HCT116 (cell line): ENCODE measurements at regions of chr4 and their contacts with region 1.

Region 1: GRCh38 chr4:3791978-3792542 is 25.9 kb downstream of the ADRA2C start:
- DNase-seq: no peak
- ATAC-seq: peak; percentile 70
- H3K4me3 ChIP-seq: no peak overlapping the region
- H3K27ac ChIP-seq: no peak overlapping the region
- H3K4me1 ChIP-seq: no peaks in the 10 kb centered on the region
- H3K27me3 ChIP-seq: no peaks in the 10 kb centered on the region
- CTCF ChIP-seq: no peak
- POLR2A ChIP-seq: no peak
- RAD21 ChIP-seq: no peak

Region 2: DNA sequence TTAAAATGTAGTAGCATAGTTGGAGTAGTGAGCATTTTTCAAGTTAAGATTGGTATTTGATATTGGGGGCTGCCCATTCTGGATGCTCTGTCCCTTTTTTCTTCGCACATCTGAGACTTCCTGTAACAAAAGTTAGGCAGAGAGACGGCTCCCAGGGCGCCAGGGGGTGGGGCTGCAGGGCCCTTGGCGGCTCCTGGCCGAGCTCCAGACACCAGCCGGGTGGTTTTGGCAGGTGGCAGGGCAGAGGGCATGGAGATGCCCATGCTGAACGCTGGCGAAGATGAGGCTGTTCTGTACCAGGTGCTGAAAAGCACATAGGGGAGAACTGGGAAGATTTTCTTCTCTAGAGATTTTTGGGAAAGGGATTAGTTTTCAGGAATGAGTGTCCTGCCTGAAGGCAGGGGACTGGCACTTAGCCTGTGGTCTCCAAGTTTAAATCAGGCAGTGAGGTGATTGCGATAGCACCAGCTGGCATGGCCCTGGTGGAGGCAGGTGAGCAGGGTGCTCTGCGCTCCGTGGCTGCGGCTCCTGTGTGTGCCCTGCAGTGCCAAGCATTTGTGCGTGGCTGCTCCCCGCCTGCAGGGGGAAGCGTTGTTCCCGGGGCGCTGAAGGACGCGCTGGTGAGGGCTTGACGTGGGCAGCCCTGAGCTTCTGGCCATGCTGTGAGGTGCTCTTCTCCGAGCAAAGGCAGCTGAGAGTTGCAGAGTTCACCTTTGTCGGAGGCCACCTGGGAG is 373.9 kb before region 1 on chr4:
- CTCF ChIA-PET with region 1: no interaction called
- POLR2A ChIA-PET with region 1: no interaction called
- RAD21 ChIA-PET with region 1: no interaction called
- intact Hi-C with region 1: no loop called
- DNase-seq: no peak
- ATAC-seq: peak; percentile 94
- H3K4me3 ChIP-seq: no peak overlapping the region
- H3K27ac ChIP-seq: no peak overlapping the region
- H3K4me1 ChIP-seq: no peaks in the 10 kb centered on the region
- H3K27me3 ChIP-seq: no peaks in the 10 kb centered on the region
- CTCF ChIP-seq: peak; percentile 37 to 70 (median 57); a peak in 5 of 6 replicates
- POLR2A ChIP-seq: no peak
- RAD21 ChIP-seq: peak; percentile 52; the same call in 1 of the 2 replicates

Region 3: GRCh38 chr4:3747581-3747904 is 44.5 kb before region 1 on chr4:
- CTCF ChIA-PET with region 1: no interaction called
- POLR2A ChIA-PET with region 1: no interaction called
- RAD21 ChIA-PET with region 1: no interaction called
- intact Hi-C with region 1: no loop called
- DNase-seq: no peak
- ATAC-seq: no peak
- H3K4me3 ChIP-seq: no peak overlapping the region
- H3K27ac ChIP-seq: no peak overlapping the region
- H3K4me1 ChIP-seq: peaks cover 5 to 23% of the 10 kb centered on the region in 2 experiments; a peak in 3 of 4 replicates
- H3K27me3 ChIP-seq: no peaks in the 10 kb centered on the region
- CTCF ChIP-seq: peak in 2 of 3 experiments; percentile 36 to 37; a peak in 3 of 6 replicates
- POLR2A ChIP-seq: no peak
- RAD21 ChIP-seq: no peak

Region 4: DNA sequence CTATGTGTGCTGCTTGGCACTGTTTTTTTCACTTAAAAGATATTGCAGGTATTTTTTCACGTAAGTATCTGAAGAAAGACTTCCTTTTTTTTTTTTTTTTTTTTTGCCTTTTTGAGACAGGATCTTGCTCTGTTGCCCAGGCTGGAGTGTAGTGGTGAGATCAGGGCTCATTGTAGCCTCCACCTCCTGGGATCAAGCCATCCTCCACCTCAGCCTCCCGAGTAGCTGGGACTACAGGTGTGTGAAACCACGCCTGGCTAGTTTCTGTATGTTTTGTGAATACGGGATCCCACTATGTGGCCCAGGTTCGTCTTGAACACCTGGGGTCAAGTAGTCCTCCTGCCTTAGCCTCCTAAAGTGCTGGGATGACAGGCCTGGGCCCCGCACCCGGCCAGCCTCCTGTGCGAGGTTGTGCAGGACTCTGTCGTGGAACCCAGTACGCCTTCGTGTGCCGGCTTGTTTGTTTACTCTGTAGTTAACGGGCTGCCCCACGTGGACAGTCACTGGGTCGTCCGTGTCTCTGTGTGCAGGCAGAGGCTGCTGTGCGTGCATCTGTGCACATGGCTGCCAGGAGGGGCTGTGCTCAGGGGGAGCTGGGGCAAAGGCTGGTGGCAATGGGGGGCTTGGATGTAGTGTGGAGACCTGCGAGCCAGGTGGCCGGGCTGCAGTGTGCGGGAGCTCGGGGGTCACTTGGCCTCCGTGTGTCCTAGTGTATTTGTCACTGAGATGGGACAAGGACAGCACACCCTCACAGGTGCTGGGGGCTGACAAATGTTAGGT is 153.6 kb after region 1 on chr4:
- CTCF ChIA-PET with region 1: no interaction called
- POLR2A ChIA-PET with region 1: no interaction called
- RAD21 ChIA-PET with region 1: no interaction called
- intact Hi-C with region 1: loop called (anchors 10 kb)
- DNase-seq: no peak
- ATAC-seq: no peak
- H3K4me3 ChIP-seq: no peak overlapping the region
- H3K27ac ChIP-seq: no peak overlapping the region
- H3K4me1 ChIP-seq: peaks cover 0 to 2% of the 10 kb centered on the region in 2 experiments; a peak in 1 of 4 replicates
- H3K27me3 ChIP-seq: no peaks in the 10 kb centered on the region
- CTCF ChIP-seq: no peak
- POLR2A ChIP-seq: no peak
- RAD21 ChIP-seq: no peak